Posterior cingulate gyrus (tissue), 11 donors: ENCODE measurements at regions of chr2 and their contacts with region 1.

Region 1: GRCh38 chr2:156400706-156401678 is 35.2 kb upstream of the GPD2 start:
- DNase-seq: peak; percentile 45 to 95 (median 69)

Region 2: DNA sequence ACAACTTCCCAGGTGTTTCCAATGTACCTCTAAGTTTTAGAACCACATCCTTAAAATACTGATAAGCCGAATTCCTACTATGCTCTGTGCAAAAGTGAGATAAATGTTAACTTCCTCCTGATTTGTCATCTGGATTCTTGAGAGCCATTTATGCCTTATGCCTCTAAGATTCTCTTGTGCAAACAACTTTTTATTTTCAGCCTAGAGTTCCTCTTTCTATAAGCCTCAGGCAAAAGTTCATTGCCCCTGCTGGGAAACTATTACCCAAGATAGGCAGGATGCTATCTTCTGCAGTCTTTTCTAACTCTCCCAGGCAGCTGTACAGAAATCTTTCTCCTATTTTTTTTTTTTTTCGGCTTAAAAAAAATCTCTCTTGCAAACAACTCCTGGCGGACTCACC is 1486.4 kb before region 1 on chr2:
- intact Hi-C with region 1: no loop called
- DNase-seq: no peak

Region 3: GRCh38 chr2:156192468-156192867 is 208.5 kb before region 1 on chr2:
- intact Hi-C with region 1: no loop called
- DNase-seq: no peak

Region 4: DNA sequence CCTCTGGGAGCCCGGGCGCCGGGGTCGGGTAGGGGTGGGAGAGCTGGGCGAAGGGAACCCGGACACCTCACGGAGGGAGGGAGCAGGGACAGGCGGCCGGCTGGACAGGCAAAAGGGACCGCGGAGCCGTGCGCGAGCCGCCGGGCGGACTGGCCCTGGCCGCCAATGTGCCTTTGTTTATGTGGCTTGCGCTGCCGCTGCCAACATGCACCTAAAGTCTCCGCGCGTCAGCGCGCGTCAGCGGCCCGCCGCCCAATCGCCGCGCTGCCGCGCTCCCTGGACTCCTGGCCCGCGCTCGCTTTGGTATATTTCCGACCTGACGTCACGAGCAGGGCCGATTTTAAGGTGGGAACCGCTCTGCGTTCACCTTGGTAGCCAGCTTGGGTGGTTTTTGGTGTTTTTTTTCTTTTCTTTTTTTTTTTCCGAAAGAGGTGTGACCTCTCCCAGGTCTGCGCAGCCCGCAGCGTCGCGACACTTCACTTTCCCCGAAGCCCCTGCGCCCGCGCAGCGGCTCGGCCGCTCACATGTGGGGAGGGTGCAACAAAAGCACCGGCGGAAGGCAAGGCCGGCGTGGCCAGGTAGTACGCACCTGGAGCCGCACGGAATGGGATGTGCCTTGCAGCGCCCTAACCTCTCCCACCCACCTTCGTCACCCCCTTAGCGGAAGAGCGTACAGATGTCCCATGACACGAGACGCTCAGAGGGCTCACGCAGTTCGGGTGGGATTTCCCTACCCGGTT is 68.3 kb before region 1 on chr2 and contains the start of gene NR4A2:
- intact Hi-C with region 1: loop called (anchors 2 kb)
- DNase-seq: peak; percentile 74 to 97 (median 84)

Region 5: GRCh38 chr2:156341452-156342253 is 59.3 kb before region 1 on chr2:
- intact Hi-C with region 1: loop called (anchors 2 kb)
- DNase-seq: peak; percentile 65 to 96 (median 76)

Region 6: DNA sequence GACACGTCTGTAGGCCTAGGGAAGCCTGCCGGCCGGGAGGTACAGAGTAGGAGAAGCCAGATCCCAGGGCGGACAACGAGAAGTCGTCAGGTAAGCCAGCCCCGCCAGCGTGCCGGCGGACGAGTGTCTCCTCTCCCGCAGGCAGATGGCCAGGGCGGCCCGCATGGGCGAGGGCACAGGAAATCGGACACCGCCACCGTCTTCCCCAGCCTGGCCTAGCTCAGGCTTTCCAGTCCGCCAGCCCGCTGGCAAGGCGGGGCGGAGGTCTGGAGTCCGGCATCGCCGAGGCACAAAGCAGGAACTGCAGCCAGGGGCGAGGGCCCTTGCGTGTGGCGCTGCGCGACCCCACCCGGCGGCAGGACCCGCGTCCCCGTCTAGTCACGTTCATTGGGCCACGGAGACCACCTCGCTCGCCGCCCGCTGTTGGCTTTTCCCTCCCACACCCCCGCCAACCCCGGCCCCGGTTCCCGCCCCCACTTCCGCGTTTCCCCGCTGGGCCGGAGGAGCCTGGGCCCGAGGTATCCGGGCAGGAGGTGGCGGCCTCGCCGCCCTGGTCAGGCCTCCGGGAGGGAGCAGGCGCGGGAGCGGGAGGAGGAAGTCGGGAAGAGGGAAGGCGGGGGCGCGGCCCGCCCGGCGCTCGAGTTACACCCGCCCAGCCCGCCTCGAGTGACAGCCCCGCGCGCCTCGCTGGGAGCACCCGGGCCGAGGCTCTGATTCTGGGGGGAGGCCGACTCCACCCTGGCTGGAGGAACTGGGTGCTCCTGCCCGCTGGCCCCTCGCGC is 34.9 kb after region 1 on chr2 and contains the start of gene GPD2:
- intact Hi-C with region 1: loop called (anchors 2 kb)
- DNase-seq: peak; percentile 74 to 97 (median 82)